ENCODE measurements at regions of chr9 and their contacts with region 1.

Region 1: DNA sequence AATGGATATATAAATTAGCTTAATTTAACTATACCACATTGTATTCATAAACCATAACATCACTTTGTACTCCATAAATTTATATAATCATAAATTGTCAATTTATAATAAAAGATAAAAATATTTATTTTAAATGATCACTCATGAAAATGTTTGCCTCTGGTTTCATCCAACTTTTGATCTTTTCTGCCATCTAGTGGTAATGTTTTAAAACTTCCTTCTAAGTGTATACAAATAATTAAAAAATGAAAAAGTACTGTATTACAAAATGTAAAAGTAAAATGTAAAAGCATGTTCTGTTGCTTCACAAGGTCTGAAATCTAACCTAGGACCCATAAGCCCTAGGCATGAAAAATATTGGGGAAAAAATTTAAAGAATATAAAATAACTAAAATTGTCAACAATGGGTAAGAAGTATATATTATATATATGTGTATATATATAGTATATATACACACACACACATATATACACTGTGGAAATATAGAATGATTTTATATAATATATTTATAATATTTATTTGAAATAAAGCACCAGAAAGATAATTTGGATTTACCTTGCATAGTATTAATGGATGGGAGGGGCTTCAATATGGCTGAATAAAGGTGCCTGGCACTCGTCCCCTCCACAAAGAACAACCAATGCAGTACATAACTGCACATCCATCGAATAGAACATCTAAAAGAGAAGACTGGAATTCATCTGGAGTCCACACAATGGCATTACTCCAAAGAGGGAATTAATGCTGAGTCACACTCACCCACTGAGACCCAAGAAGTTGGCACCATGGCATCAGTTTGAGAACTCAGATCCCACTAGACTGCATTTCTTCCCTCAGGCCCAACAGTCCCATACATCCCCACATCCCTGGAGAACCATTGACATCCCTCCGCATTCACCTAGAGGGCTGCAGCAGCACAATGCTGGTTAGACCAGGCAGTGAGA is 32.5 kb downstream of the ANXA1 start:
- DNase-seq: peak; percentile 38
- ATAC-seq: no peak
- H3K4me3 ChIP-seq: no peak overlapping the region
- H3K27ac ChIP-seq: no peak overlapping the region
- H3K4me1 ChIP-seq: peaks cover 11 to 27% of the 10 kb centered on the region in 2 experiments; a peak in 3 of 4 replicates
- H3K27me3 ChIP-seq: no peaks in the 10 kb centered on the region
- CTCF ChIP-seq: peak in 2 of 3 experiments; percentile 20 to 87; a peak in 4 of 6 replicates
- POLR2A ChIP-seq: no peak
- RAD21 ChIP-seq: peak; percentile 81

Region 2: GRCh38 chr9:72871685-72872084 is 312.5 kb before region 1 on chr9:
- CTCF ChIA-PET with region 1: interaction called, 8 read pairs
- POLR2A ChIA-PET with region 1: no interaction called
- RAD21 ChIA-PET with region 1: no interaction called
- intact Hi-C with region 1: loop called (anchors 1 kb)
- DNase-seq: peak; percentile 26
- ATAC-seq: peak; percentile 42
- H3K4me3 ChIP-seq: no peak overlapping the region
- H3K27ac ChIP-seq: no peak overlapping the region
- H3K4me1 ChIP-seq: no peaks in the 10 kb centered on the region
- H3K27me3 ChIP-seq: no peaks in the 10 kb centered on the region
- CTCF ChIP-seq: peak; percentile 31 to 71 (median 69); a peak in 4 of 6 replicates
- POLR2A ChIP-seq: no peak
- RAD21 ChIP-seq: peak; percentile 76

Region 3: DNA sequence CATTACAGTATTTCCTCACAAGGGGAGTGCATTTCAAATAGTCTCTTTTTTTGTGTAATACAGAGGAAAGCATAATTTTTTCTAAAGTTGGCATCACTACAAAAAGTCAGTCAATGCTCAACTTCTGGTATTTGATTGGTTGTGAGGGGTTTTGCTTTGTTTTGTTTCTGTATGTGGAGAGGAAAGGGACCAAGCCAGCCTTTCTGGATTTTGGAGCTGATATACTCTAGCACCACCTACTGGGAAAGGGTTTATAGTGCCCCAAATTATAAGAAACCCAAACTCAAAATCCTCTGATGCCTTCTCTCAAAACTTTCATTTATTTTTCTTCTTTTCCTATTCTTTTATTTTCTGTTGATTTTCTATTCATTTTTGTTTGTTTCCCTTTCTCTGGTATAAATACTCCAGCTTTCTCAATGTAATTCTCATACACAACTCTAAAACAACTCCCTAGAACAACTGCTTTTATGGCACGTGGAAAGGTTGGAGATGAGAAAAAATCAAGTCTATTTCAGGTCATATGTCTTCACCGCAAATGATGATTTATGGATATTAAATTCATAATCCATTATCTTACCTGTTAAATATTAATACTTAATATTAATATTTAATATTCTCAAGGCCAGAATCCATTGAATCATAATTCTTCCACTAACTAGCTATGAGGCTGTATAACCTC is 102.1 kb before region 1 on chr9:
- CTCF ChIA-PET with region 1: interaction called, 23 read pairs
- POLR2A ChIA-PET with region 1: no interaction called
- RAD21 ChIA-PET with region 1: no interaction called
- intact Hi-C with region 1: loop called (anchors 1 kb)
- DNase-seq: peak; percentile 41
- ATAC-seq: peak; percentile 68
- H3K4me3 ChIP-seq: no peak overlapping the region
- H3K27ac ChIP-seq: no peak overlapping the region
- H3K4me1 ChIP-seq: peaks cover 5 to 12% of the 10 kb centered on the region in 2 experiments; a peak in 3 of 4 replicates
- H3K27me3 ChIP-seq: no peaks in the 10 kb centered on the region
- CTCF ChIP-seq: peak; percentile 57 to 78 (median 78); a peak in 5 of 6 replicates
- POLR2A ChIP-seq: no peak
- RAD21 ChIP-seq: peak; percentile 73

Region 4: GRCh38 chr9:73104342-73104741 is 79.8 kb before region 1 on chr9:
- CTCF ChIA-PET with region 1: interaction called, 25 read pairs
- POLR2A ChIA-PET with region 1: interaction called, 8 read pairs
- RAD21 ChIA-PET with region 1: interaction called, 5 to 8 read pairs
- intact Hi-C with region 1: loop called (anchors 1 kb)
- DNase-seq: no peak
- ATAC-seq: no peak
- H3K4me3 ChIP-seq: no peak overlapping the region
- H3K27ac ChIP-seq: no peak overlapping the region
- H3K4me1 ChIP-seq: peaks cover 0 to 12% of the 10 kb centered on the region in 2 experiments; a peak in 2 of 4 replicates
- H3K27me3 ChIP-seq: no peaks in the 10 kb centered on the region
- CTCF ChIP-seq: no peak
- POLR2A ChIP-seq: no peak
- RAD21 ChIP-seq: no peak